ENCODE measurements at regions of chr3 and their contacts with region 1.

Region 1: DNA sequence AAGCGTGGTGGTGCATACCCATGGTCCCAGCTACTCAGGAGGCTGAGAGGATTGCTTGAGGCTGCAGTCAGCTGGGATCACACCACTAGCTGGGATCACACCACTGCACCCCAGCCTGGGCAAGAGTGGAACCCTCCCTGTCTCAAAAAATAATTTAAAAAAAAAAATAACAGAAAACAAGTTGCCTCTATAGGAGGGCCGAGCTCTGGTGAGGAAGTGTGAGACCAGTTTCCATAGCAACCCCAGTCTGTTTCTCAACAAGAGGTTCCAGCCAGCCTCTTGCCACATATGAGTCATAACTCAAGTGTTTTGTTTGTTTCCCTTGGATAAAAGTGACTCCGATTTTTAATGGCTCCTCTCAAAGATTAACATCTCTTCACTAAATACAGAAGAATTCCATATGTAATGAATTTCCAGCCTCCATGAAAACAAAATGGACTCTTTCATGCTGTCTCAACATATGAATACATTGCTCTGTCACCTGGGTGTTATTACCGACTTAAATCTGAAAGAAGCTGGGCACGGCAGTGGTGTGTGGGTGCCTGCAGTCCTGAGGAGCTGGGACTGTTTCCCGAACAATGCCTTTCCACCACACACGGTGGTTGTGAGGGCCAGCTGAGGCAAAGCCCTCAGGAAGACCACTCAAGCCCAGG is 19.7 kb downstream of the TMEM43 start:
- DNase-seq: peak; percentile 86
- H3K4me3 Mint-ChIP-seq: peak overlapping the region; percentile 47
- H3K27ac Mint-ChIP-seq: peak overlapping the region; percentile 91
- H3K4me1 Mint-ChIP-seq: peaks cover 43% of the 10 kb centered on the region
- H3K27me3 Mint-ChIP-seq: no peaks in the 10 kb centered on the region

Region 2: GRCh38 chr3:14001136-14001535 is 143.4 kb before region 1 on chr3:
- CTCF ChIA-PET with region 1: no interaction called
- POLR2A ChIA-PET with region 1: no interaction called
- DNase-seq: no peak
- H3K4me3 Mint-ChIP-seq: no peak overlapping the region
- H3K27ac Mint-ChIP-seq: no peak overlapping the region
- H3K4me1 Mint-ChIP-seq: no peaks in the 10 kb centered on the region
- H3K27me3 Mint-ChIP-seq: peaks cover 2% of the 10 kb centered on the region

Region 3: GRCh38 chr3:14124615-14125190 is 19.8 kb before region 1 on chr3 and contains the starts of genes CHCHD4 and TMEM43:
- CTCF ChIA-PET with region 1: interaction called, 17 read pairs
- POLR2A ChIA-PET with region 1: interaction called, 6 read pairs
- DNase-seq: peak; percentile 99
- H3K4me3 Mint-ChIP-seq: peak within 1 kb of the TSS; percentile 95
- H3K27ac Mint-ChIP-seq: peak within 1 kb of the TSS; percentile 93
- H3K4me1 Mint-ChIP-seq: peaks cover 67% of the 10 kb centered on the region
- H3K27me3 Mint-ChIP-seq: no peaks in the 10 kb centered on the region
- total RNA-seq, gene CHCHD4: 12.7 to 13.2 TPM
- total RNA-seq, gene TMEM43: 40.4 to 42.0 TPM

Measured in activated CD4-positive, alpha-beta T cell treated with anti-CD3 and anti-CD28 coated beads, Interleukin-2, amount 10 ng/mL, durations not matched to agents 7 days and 5 days (primary cell).